ENCODE measurements at regions of chr1 and their contacts with region 1.

Region 1: GRCh38 chr1:40691538-40692428 is at the start of gene NFYC:
- DNase-seq: peak; percentile 94 to 99
- ATAC-seq: peak; percentile 94 to 98 (median 96)
- H3K4me3 ChIP-seq: peak within 1 kb of the TSS; percentile 72 to 97 (median 82)
- H3K27ac ChIP-seq: peak within 1 kb of the TSS; percentile 97 to 100 (median 99)
- H3K4me1 ChIP-seq: peaks cover 0 to 58% (median 31%) of the 10 kb centered on the region in 9 donors
- H3K27me3 ChIP-seq: no peaks in the 10 kb centered on the region
- CTCF ChIP-seq: peak in 1 of 9 donors; percentile 4
- total RNA-seq, gene NFYC: 56.1 to 84.7 (median 73.1) TPM

Region 2: DNA sequence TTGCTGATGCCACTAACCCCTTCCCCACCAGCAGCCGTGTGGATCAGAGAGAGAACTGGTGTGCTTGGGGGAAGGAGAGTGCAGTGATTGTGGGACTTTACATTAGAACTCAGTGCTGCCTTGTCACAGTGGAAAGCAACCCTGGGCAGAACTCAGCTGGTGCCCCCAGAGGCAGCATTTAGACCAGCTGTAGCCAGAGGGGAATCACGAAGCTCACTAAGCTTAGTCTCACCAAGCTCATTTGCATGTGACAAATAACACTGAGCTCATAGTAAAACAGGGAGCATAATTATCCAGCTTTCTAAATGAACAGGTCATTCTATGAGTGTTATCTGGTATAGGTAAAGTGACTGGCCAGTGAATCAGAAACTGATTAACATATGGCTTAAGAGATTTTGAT is 328.1 kb before region 1 on chr1:
- intact Hi-C with region 1: no loop called
- DNase-seq: no peak
- ATAC-seq: no peak
- H3K4me3 ChIP-seq: no peak overlapping the region
- H3K27ac ChIP-seq: no peak overlapping the region
- H3K4me1 ChIP-seq: peaks cover 0 to 23% (median 0%) of the 10 kb centered on the region in 9 donors
- H3K27me3 ChIP-seq: peaks cover 0 to 7% (median 0%) of the 10 kb centered on the region in 7 donors
- CTCF ChIP-seq: no peak

Region 3: GRCh38 chr1:40709100-40709801 is 17.5 kb after region 1 on chr1:
- intact Hi-C with region 1: loop called in 1 of 10 experiments (anchors 1 kb)
- DNase-seq: peak; percentile 21 to 92
- ATAC-seq: peak; percentile 91 to 97 (median 95)
- H3K4me3 ChIP-seq: peak overlapping the region; percentile 19 to 67 (median 62)
- H3K27ac ChIP-seq: peak overlapping the region; percentile 79 to 91 (median 88)
- H3K4me1 ChIP-seq: peaks cover 0 to 74% (median 68%) of the 10 kb centered on the region in 9 donors
- H3K27me3 ChIP-seq: no peaks in the 10 kb centered on the region
- CTCF ChIP-seq: no peak

Region 4: GRCh38 chr1:40742363-40743061 is 50.7 kb after region 1 on chr1:
- intact Hi-C with region 1: loop called in 1 of 10 experiments (anchors 5 kb)
- DNase-seq: no peak
- ATAC-seq: peak; percentile 25 to 78 (median 67)
- H3K4me3 ChIP-seq: no peak overlapping the region
- H3K27ac ChIP-seq: peak overlapping the region in 6 of 10 donors; percentile 15 to 50 (median 38)
- H3K4me1 ChIP-seq: peaks cover 9 to 92% (median 59%) of the 10 kb centered on the region in 9 donors
- H3K27me3 ChIP-seq: no peaks in the 10 kb centered on the region
- CTCF ChIP-seq: no peak

Region 5: GRCh38 chr1:40802078-40802741 is 110.4 kb after region 1 on chr1:
- intact Hi-C with region 1: no loop called
- DNase-seq: peak; percentile 88
- ATAC-seq: peak; percentile 85 to 93 (median 89)
- H3K4me3 ChIP-seq: peak overlapping the region in 9 of 10 donors; percentile 10 to 58 (median 45)
- H3K27ac ChIP-seq: peak overlapping the region in 9 of 10 donors; percentile 45 to 84 (median 72)
- H3K4me1 ChIP-seq: peaks cover 11 to 62% (median 43%) of the 10 kb centered on the region in 9 donors
- H3K27me3 ChIP-seq: no peaks in the 10 kb centered on the region
- CTCF ChIP-seq: no peak